Transverse colon (tissue), 4 donors: ENCODE measurements at regions of chr17 and their contacts with region 1.

Region 1: DNA sequence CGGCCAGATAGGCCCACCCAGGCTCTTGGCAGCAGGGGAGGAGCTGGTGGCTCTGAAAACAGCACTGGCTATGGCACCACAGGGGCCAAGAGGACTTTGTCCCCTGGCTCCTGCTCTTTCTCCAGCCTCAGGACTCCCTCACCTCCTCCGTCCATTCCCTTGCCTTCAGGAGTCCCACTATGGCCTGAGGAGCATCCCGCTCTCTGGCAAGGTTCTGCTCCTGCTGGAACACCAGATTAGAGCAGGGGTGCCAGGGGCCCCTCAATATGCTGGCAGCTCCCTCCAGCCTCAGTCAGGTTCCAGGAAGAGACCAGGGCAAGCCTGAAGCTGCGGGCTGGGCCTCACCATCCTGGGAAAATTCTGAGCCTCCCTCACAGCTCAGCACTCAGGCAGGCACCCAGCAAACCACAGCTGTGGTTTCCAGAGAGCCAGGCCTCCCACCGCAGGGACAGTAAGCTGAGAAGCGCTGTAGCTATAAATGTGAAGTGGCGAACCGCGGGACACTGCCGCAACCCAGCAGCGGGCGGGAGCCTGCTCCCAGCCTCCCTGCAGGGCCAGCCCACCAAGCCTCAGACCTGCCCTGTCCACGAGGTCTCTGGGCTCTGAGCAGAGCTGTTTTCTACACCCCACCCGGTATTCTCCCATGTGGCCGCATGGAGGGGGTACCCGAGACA is 25.7 kb downstream of the C17orf100 start:
- DNase-seq: no peak
- H3K4me3 ChIP-seq: no peak overlapping the region
- H3K27ac ChIP-seq: no peak overlapping the region
- H3K4me1 ChIP-seq: no peaks in the 10 kb centered on the region
- H3K27me3 ChIP-seq: peaks cover 48% of the 10 kb centered on the region
- CTCF ChIP-seq: no peak
- EP300 ChIP-seq: no peak
- POLR2A ChIP-seq: no peak

Region 2: DNA sequence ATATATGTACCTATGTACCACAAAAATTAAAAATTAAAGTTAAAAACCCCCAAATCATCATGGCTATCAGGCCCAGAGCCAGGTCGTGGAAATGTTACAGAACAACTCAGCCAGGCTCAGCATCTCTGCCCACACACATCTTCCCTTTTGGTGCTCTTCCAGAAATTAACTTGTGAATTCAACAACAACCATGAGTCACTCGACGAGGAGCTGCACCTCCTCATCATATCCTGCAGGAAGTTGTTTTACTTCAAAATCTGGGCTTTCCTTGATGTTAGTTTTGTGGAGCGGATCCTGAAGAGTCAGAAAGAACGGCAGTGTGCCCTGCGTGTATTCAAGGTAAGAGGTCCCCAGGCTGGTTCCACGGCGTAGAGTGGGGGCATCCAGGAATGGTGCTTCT is 109.3 kb after region 1 on chr17:
- in situ Hi-C with region 1: loop called in 1 of 4 experiments (anchors 25 kb)
- intact Hi-C with region 1: no loop called
- DNase-seq: no peak
- H3K4me3 ChIP-seq: no peak overlapping the region
- H3K27ac ChIP-seq: no peak overlapping the region
- H3K4me1 ChIP-seq: no peaks in the 10 kb centered on the region
- H3K27me3 ChIP-seq: peaks cover 73% of the 10 kb centered on the region
- CTCF ChIP-seq: no peak
- EP300 ChIP-seq: no peak
- POLR2A ChIP-seq: no peak